Activated T-helper 1 cell treated with anti-CD3 and anti-CD28 coated beads, Interleukin-12 subunit alpha, Interleukin-12 subunit beta, Interleukin-2, Interleukin-4 antibody, amounts not matched to agents 30 ng/mL and 10 ng/mL and 1 ng/mL, durations not matched to agents 14 hours and 24 hours and 36 hours (primary cell): ENCODE measurements at regions of chr7 and their contacts with region 1.

Region 1: DNA sequence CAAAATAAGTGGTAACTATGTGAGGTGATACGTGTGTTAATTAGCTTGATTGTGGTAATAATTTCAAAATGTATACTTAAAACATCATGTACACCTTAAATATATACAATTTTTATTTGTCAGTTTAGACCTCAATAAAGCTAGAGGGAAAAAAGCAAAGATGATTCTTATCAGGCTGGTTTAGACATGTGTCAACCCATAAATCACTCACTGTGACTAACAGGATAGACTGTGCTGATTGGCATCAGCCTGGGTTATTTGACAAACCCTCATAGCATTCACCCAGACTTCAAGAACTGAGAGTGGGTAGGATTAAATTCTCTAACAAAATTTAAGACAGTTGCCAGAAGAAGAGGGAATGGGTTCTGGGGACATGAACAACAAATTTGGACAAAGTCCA is 73.8 kb upstream of the TMEM140 start:
- DNase-seq: no peak
- H3K4me3 Mint-ChIP-seq: no peak overlapping the region
- H3K27ac Mint-ChIP-seq: no peak overlapping the region
- H3K4me1 Mint-ChIP-seq: no peaks in the 10 kb centered on the region
- H3K27me3 Mint-ChIP-seq: no peaks in the 10 kb centered on the region

Region 2: DNA sequence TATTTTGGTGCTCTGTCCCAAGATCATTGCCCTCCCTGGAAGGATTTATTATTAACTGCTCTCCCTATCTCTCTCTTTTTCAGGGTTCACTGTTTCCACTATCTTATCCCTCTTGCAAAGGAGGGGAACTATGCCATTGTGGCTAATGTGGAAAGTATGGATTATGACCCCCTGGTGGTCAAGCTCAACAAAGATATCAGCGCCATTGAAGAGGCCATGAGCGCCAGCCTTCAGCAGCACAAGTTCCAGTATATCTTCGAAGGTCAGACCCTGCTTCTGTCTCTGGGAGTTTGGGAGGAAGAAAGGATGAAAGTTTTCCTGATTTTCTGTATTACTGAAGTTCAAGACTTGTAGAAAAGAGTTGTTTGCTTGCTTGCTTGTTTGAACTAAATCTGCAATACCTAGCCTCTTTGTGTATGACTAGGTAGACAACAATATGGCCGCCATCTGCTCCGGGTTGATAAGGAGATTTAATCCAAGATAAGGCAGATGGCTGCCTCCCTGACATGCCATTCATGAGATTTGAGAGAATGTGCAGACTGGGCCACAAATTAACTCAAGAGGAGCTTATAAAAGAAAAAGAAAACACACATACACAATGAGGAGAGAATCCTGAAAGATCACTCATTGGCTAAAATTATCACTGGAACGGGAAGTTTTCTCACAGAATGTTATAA is 1069.1 kb before region 1 on chr7:
- intact Hi-C with region 1: no loop called
- DNase-seq: no peak
- H3K4me3 Mint-ChIP-seq: no peak overlapping the region
- H3K27ac Mint-ChIP-seq: no peak overlapping the region
- H3K4me1 Mint-ChIP-seq: no peaks in the 10 kb centered on the region
- H3K27me3 Mint-ChIP-seq: no peaks in the 10 kb centered on the region

Region 3: DNA sequence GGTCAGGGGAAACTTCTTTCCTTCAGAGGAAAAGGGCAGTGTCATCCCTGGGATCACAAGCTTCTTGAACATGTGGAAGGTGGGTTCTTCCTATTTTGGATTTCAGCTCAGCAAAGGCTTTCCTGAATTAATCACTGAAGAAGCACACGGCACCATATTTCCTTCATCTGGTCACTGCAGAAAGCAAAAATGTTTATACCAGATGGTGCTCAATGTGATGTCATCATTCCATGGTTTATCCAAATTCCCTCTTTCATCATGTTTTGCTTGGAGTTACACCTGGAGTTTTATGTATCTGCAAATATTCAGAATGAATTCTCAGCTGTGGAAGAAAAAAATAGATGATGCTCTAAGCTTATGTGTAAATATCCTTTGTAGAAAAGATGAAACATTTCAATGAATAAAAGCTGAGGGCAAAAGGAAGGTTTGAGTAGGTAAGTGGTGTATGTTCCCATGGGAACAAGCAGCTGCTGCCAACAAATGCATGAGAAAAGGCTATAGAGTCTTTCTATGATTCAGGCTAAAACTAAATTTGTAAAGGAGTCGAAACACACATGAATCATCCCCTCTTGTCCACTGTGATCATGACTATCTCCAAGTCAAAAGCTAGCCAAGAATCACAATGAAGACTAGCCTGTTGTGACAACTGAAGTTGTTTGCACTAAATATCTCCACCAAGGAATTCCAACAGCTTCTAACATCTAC is 454.3 kb before region 1 on chr7:
- intact Hi-C with region 1: no loop called
- DNase-seq: no peak
- H3K4me3 Mint-ChIP-seq: no peak overlapping the region
- H3K27ac Mint-ChIP-seq: no peak overlapping the region
- H3K4me1 Mint-ChIP-seq: no peaks in the 10 kb centered on the region
- H3K27me3 Mint-ChIP-seq: peaks cover 23% of the 10 kb centered on the region

Region 4: DNA sequence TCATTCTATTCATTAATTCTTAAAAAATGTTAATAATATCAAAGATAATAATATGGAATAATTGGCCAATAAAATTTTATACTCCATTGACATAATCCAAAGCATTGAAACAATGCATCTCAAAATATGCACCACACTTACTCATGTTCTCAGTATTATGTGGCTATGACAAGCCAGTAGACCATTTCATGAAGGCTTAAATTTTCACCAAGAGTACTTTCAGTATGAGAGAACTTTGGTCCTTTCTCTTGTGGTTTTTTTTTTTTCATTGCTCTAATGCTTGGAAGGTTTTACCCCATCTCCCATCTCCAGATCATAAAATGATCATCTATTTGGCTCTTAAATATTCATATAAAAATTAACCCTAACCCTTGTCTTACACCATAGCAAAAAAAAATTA is 28.3 kb after region 1 on chr7:
- intact Hi-C with region 1: loop called (anchors 2 kb)
- DNase-seq: no peak
- H3K4me3 Mint-ChIP-seq: no peak overlapping the region
- H3K27ac Mint-ChIP-seq: no peak overlapping the region
- H3K4me1 Mint-ChIP-seq: no peaks in the 10 kb centered on the region
- H3K27me3 Mint-ChIP-seq: peaks cover 3% of the 10 kb centered on the region